ENCODE measurements at regions of chr17 and their contacts with region 1.

Region 1: GRCh38 chr17:63735691-63736090 is 5.9 kb downstream of the STRADA start:
- DNase-seq: no peak
- ATAC-seq: no peak
- H3K4me3 ChIP-seq: no peak overlapping the region
- H3K27ac ChIP-seq: no peak overlapping the region
- H3K4me1 ChIP-seq: peaks cover 6% of the 10 kb centered on the region
- H3K27me3 ChIP-seq: no peaks in the 10 kb centered on the region
- CTCF ChIP-seq: no peak
- POLR2A ChIP-seq: no peak
- RAD21 ChIP-seq: no peak

Region 2: GRCh38 chr17:63685041-63685440 is 50.6 kb before region 1 on chr17:
- CTCF ChIA-PET with region 1: no interaction called
- POLR2A ChIA-PET with region 1: no interaction called
- dilution Hi-C with region 1: no loop called
- in situ Hi-C with region 1: no loop called
- intact Hi-C with region 1: loop called (anchors 10 kb)
- DNase-seq: no peak
- ATAC-seq: peak; percentile 61
- H3K4me3 ChIP-seq: no peak overlapping the region
- H3K27ac ChIP-seq: no peak overlapping the region
- H3K4me1 ChIP-seq: no peaks in the 10 kb centered on the region
- H3K27me3 ChIP-seq: no peaks in the 10 kb centered on the region
- CTCF ChIP-seq: no peak
- POLR2A ChIP-seq: no peak
- RAD21 ChIP-seq: no peak

Measured in IMR-90 (cell line).